ENCODE measurements at regions of chr14 and their contacts with region 1.

Region 1: DNA sequence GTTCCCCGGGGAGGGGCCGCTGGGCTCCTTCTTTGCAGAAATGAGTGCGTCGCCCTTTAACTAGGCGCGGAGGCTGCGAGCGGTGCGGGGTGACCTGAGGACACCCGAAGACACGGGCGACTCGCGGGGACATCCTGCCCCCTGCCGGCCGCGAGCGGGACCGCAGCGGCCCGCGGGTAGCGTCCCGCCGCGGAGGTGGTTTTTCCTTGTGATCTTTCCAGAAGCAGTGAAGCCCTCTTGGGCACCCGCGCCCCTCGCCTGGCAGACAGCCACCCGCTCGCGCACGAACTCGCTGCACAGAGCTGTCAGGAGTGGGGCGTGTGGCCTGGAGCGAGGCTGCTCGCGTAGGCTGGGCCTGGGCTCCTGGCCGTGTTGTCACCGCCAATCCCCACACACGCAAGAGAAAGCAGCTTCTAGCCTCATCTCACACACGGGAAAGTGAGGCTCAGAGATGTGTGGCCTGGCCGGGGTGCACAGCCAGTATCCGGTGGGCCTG is 67.2 kb downstream of the DIO3 start:
- DNase-seq: peak in 1 of 2 donors; percentile 82
- H3K4me3 ChIP-seq: peak overlapping the region; percentile 25 to 44
- H3K27ac ChIP-seq: no peak overlapping the region
- H3K4me1 ChIP-seq: peaks cover 0 to 4% of the 10 kb centered on the region in 2 donors
- H3K27me3 ChIP-seq: no peaks in the 10 kb centered on the region
- CTCF ChIP-seq: peak; percentile 94 to 99 (median 98)

Region 2: DNA sequence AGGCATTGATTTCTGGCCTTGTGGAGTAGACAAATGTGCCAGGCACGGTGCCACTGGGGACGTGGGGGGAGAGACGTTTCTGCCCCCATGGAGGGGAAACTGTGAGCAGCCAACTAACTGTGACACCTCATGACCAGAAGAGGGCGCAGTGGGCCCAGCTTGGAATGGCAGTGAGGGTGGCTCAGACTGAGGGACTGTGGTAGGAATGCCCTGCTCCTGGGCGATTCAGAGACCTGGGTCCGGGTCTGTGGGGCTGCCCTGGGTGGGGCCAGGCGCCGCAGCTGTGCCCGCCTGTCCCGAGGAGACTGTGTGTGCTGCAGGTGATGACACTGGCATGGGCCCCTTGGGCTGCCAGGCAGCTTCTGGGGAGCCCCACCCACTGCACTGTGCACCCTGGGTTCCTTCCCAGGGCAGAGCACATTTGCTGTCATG is 1244.8 kb before region 1 on chr14:
- intact Hi-C with region 1: loop called (anchors 5 kb)
- DNase-seq: peak in 1 of 2 donors; percentile 72
- H3K4me3 ChIP-seq: no peak overlapping the region
- H3K27ac ChIP-seq: no peak overlapping the region
- H3K4me1 ChIP-seq: no peaks in the 10 kb centered on the region
- H3K27me3 ChIP-seq: no peaks in the 10 kb centered on the region
- CTCF ChIP-seq: peak; percentile 41 to 72 (median 49)

Region 3: DNA sequence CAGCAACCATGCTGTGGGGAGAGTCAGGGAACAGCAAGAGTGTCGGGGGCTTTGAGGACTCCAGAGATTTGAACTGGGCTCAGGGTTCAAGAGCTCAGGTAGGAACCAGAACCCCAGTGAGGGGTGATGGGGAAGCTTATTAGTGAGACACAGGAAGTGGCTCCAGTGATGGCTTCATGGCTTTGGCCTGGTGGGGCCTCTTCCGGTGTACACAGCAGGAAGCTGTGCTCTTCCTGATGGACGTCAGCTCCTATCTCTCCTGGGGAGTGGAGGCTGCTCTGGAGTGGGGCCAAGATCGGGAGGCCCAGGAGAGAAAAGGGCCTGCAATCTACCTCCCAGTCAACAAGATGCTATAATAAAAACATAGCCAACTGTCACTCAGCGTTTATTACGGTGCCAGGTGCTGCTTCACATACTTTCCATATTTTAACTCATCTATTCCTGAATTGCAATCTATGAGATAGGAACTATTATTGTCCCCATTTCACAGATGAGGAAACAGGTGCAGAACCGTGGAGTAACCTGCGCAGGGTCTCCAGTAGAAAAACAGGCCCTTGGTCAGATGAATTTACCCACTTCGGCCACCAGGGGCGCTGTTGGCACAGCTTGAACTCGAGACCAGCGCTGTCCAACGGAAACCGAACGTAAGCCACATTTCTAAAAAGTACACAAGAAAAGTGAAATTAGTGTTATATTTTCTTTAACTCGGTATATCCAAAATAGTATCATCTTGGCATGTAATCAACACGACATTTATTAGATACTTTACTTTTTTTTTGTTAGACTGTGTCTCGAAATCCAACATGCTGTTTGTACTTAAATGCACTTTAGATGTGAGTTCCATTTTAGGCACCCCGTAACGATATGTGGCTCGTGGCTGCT is 965.4 kb before region 1 on chr14:
- intact Hi-C with region 1: loop called (anchors 2 kb)
- DNase-seq: no peak
- H3K4me3 ChIP-seq: no peak overlapping the region
- H3K27ac ChIP-seq: no peak overlapping the region
- H3K4me1 ChIP-seq: no peaks in the 10 kb centered on the region
- H3K27me3 ChIP-seq: no peaks in the 10 kb centered on the region
- CTCF ChIP-seq: peak; percentile 33 to 67 (median 52)

Region 4: GRCh38 chr14:101072945-101073597 is 555.4 kb before region 1 on chr14:
- intact Hi-C with region 1: loop called (anchors 5 kb)
- DNase-seq: peak; percentile 43 to 83
- H3K4me3 ChIP-seq: no peak overlapping the region
- H3K27ac ChIP-seq: no peak overlapping the region
- H3K4me1 ChIP-seq: no peaks in the 10 kb centered on the region
- H3K27me3 ChIP-seq: peaks cover 10% of the 10 kb centered on the region
- CTCF ChIP-seq: no peak

Measured in ascending aorta (tissue), 2 donors.